PC-9 (cell line): ENCODE measurements at regions of chr10 and their contacts with region 1.

Region 1: DNA sequence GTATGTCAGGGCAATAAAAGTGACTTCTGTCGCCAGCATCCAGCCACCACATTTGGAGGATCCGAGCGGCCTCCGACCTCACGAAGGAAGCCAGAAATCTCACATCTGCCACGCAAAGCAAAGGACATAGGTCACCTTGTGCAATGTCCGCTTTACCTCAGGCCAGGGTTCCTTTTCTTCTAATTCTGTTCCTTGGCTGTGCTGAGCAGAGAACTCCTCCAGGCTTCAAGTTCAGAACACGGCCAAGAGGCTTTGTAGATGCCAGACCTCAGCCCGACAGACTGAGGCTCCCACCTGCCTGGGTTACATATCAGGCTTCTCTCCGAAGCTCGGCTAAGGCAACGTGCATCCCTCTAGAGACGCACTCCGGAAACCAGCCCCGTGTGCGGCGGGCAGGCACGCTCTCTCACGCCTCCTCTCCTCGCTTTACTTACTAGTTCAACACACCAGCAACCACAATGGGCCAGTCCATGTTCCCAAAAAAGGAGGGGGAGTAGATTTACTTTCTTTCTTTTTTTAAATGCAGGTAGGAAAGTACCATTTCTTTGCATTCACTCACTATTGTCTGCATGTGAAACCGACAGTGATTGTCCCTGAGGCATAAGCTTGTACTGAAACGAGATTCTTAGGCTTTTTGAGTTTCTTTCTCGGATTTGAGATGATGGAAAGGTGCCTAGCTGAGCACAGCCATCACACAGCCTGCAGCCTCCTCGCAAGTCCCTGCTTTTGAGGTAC is 122.4 kb upstream of the AFAP1L2 start:
- DNase-seq: peak; percentile 71 to 83
- H3K4me3 ChIP-seq: peak overlapping the region; percentile 61
- H3K27ac ChIP-seq: peak overlapping the region; percentile 88
- H3K4me1 ChIP-seq: peaks cover 17% of the 10 kb centered on the region
- H3K27me3 ChIP-seq: no peaks in the 10 kb centered on the region
- CTCF ChIP-seq: no peak

Region 2: GRCh38 chr10:114593240-114593784 is 66.6 kb after region 1 on chr10:
- CTCF ChIA-PET with region 1: no interaction called
- POLR2A ChIA-PET with region 1: no interaction called
- intact Hi-C with region 1: no loop called
- DNase-seq: no peak
- H3K4me3 ChIP-seq: no peak overlapping the region
- H3K27ac ChIP-seq: no peak overlapping the region
- H3K4me1 ChIP-seq: no peaks in the 10 kb centered on the region
- H3K27me3 ChIP-seq: no peaks in the 10 kb centered on the region
- CTCF ChIP-seq: no peak

Region 3: GRCh38 chr10:114616516-114616915 is 89.8 kb after region 1 on chr10:
- CTCF ChIA-PET with region 1: no interaction called
- POLR2A ChIA-PET with region 1: interaction called, 13 read pairs
- intact Hi-C with region 1: no loop called
- DNase-seq: no peak
- H3K4me3 ChIP-seq: no peak overlapping the region
- H3K27ac ChIP-seq: no peak overlapping the region
- H3K4me1 ChIP-seq: peaks cover 25% of the 10 kb centered on the region
- H3K27me3 ChIP-seq: no peaks in the 10 kb centered on the region
- CTCF ChIP-seq: no peak

Region 4: DNA sequence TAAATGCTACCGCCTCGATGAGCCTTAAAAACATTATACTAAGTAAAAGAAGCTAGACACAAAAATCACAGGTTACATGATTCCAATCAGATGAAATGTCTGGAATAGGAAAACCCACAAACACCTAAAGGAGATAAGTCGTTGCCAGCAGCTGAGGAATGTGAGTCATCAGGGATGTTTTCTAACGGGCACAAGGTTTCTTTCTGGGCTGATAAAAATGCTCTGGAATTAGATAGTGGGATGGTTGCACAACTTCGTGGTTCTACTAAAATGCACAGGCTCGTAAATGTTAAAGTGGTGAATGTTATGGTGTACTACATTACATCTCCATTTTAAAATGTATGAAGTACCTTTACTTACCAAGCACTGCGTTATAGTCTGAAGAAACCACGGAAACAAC is 121.7 kb after region 1 on chr10:
- CTCF ChIA-PET with region 1: no interaction called
- POLR2A ChIA-PET with region 1: no interaction called
- intact Hi-C with region 1: no loop called
- DNase-seq: peak; percentile 21 to 66
- H3K4me3 ChIP-seq: no peak overlapping the region
- H3K27ac ChIP-seq: no peak overlapping the region
- H3K4me1 ChIP-seq: peaks cover 40% of the 10 kb centered on the region
- H3K27me3 ChIP-seq: no peaks in the 10 kb centered on the region
- CTCF ChIP-seq: no peak